Calu3 (cell line): ENCODE measurements at regions of chr11 and their contacts with region 1.

Region 1: GRCh38 chr11:3841426-3842350 is 929 bp upstream of the RHOG start:
- DNase-seq: peak; percentile 92
- H3K4me3 Mint-ChIP-seq: peak overlapping the region; percentile 94
- H3K27ac Mint-ChIP-seq: peak overlapping the region; percentile 47
- H3K4me1 Mint-ChIP-seq: peaks cover 35% of the 10 kb centered on the region
- H3K27me3 Mint-ChIP-seq: no peaks in the 10 kb centered on the region
- CTCF ChIP-seq: peak; percentile 85

Region 2: DNA sequence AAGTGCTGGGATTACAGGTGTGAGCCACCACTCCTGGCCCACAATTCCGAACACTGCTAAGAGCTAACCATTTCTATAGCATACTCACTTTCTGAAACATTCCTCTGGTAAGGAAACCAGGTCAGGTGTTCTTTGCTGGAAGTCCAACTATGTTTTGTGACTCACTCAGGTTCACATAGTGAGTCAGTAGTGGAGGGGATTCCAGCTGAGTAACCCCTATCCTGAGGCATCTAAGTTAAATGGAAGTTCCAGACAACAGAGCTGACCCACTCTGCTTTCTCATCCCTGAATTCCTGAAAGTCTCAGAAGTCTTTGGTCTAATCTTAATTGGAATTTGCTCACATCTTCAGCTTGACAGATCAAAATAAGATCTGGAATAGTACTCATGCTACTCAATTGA is 167.5 kb before region 1 on chr11:
- CTCF ChIA-PET with region 1: no interaction called
- intact Hi-C with region 1: no loop called
- DNase-seq: no peak
- H3K4me3 Mint-ChIP-seq: no peak overlapping the region
- H3K27ac Mint-ChIP-seq: no peak overlapping the region
- H3K4me1 Mint-ChIP-seq: no peaks in the 10 kb centered on the region
- H3K27me3 Mint-ChIP-seq: no peaks in the 10 kb centered on the region
- CTCF ChIP-seq: no peak

Region 3: DNA sequence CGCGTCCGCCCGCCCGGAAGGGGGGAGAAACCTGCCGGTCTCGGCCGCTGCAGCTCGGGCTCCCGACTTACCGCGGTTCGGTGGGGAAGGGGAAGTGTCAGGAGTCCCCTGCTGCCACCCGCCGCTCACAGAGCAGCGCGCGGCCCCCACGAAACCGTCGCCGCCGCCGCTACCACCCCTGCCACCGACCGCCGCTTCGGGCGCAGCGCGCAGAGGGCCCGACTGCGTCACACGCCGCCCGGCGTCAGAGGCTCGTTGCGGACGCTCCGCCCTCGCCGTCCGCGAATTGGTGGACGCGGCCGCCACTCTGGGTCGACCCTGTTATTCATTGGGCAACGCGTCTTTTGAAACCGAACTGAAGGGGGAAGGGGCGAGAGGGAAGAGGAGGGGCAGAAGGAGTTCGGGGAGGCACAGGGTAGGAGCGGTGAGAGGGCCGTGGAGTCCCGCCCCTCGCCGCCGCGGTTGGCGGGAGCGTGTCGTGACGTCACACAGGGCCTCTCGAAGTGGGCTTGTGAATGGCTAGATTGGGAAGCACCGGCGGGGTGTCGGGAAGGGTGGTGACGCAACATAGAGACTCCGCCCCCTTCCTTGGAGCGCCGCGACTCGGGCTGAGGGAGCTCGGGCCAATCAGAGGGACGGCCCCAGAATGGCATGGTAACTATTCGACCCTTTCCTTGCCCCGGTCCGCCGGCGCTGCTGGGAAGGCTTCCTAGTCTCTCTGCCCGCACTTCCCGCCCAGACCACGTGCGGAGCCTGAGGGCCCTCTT is 44.2 kb before region 1 on chr11 and contains the start of gene NUP98:
- CTCF ChIA-PET with region 1: no interaction called
- intact Hi-C with region 1: loop called (anchors 2 kb)
- DNase-seq: peak; percentile 99
- H3K4me3 Mint-ChIP-seq: peak within 1 kb of the TSS; percentile 83
- H3K27ac Mint-ChIP-seq: peak within 1 kb of the TSS; percentile 79
- H3K4me1 Mint-ChIP-seq: peaks cover 9% of the 10 kb centered on the region
- H3K27me3 Mint-ChIP-seq: no peaks in the 10 kb centered on the region
- CTCF ChIP-seq: no peak
- total RNA-seq, gene NUP98: 114 and 126 TPM in 2 replicates

Region 4: DNA sequence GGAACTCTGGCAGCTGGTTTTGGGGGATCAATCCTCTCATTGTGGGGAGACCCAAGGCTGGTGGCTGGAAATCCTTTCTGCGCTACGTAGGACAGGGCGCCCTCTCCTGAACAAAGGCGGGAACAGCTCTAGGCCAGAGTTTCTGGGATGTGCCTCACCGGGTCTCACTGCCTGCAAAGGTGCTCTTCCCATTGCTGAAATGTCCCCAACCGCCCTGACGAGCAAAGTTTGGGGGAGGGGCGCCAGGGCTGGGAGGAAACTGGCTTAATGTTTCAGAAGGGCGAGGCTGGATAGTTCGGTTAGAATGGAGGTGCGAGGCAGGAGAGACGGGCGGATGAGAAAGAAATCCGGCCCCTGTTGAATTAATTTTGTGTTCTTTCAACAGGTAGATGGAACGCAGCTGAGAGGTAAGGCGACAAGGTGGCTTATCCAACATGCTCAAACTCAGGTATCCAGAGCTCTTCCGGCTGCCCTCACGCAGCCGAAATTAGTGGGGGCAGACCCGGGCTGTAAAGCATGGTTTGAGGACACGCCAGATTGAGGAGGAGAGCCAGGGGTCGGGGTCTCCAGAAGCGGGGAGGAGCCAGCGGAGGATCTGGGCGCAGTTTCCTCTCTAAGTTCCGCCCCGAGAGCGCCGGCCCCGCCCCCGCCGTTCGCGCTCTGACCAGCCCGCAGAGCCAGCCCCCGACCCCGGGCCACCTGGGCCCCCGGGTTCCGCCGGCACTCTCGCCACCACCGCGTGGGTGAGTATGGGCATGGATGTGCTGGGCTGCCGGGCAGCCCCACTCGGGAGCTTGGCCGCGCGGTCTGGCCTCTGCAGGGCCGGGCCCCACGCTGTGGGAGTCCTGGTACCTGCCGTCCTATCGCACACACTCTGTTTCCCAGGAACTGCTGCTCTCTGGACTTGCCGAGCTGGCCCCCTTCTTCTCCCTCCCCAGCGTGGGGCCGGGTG is 33.5 kb before region 1 on chr11 and contains the start of gene PGAP2:
- CTCF ChIA-PET with region 1: interaction called, 20 read pairs
- intact Hi-C with region 1: no loop called
- DNase-seq: peak; percentile 69
- H3K4me3 Mint-ChIP-seq: peak within 1 kb of the TSS; percentile 89
- H3K27ac Mint-ChIP-seq: no peak within 1 kb of the TSS
- H3K4me1 Mint-ChIP-seq: peaks cover 12% of the 10 kb centered on the region
- H3K27me3 Mint-ChIP-seq: no peaks in the 10 kb centered on the region
- CTCF ChIP-seq: peak; percentile 35
- total RNA-seq, gene PGAP2: 35.2 and 38.0 TPM in 2 replicates

Region 5: GRCh38 chr11:4072668-4073285 is 231.1 kb after region 1 on chr11:
- CTCF ChIA-PET with region 1: interaction called, 18 read pairs
- intact Hi-C with region 1: no loop called
- DNase-seq: peak; percentile 62
- H3K4me3 Mint-ChIP-seq: no peak overlapping the region
- H3K27ac Mint-ChIP-seq: no peak overlapping the region
- H3K4me1 Mint-ChIP-seq: no peaks in the 10 kb centered on the region
- H3K27me3 Mint-ChIP-seq: no peaks in the 10 kb centered on the region
- CTCF ChIP-seq: peak; percentile 71

Region 6: GRCh38 chr11:4123226-4123625 is 281.5 kb after region 1 on chr11:
- CTCF ChIA-PET with region 1: no interaction called
- intact Hi-C with region 1: no loop called
- DNase-seq: no peak
- H3K4me3 Mint-ChIP-seq: no peak overlapping the region
- H3K27ac Mint-ChIP-seq: no peak overlapping the region
- H3K4me1 Mint-ChIP-seq: peaks cover 4% of the 10 kb centered on the region
- H3K27me3 Mint-ChIP-seq: no peaks in the 10 kb centered on the region
- CTCF ChIP-seq: no peak

Region 7: GRCh38 chr11:4167758-4168157 is 326.1 kb after region 1 on chr11:
- CTCF ChIA-PET with region 1: no interaction called
- intact Hi-C with region 1: no loop called
- DNase-seq: no peak
- H3K4me3 Mint-ChIP-seq: no peak overlapping the region
- H3K27ac Mint-ChIP-seq: no peak overlapping the region
- H3K4me1 Mint-ChIP-seq: no peaks in the 10 kb centered on the region
- H3K27me3 Mint-ChIP-seq: no peaks in the 10 kb centered on the region
- CTCF ChIP-seq: no peak